Gastrocnemius medialis (tissue), 4 donors: ENCODE measurements at regions of chr3 and their contacts with region 1.

Region 1: GRCh38 chr3:137013955-137014688 is 56.3 kb downstream of the IL20RB start:
- DNase-seq: peak; percentile 70 to 86
- ATAC-seq: peak; percentile 96 to 98
- H3K4me3 ChIP-seq: peak overlapping the region; percentile 38 to 56 (median 54)
- H3K27ac ChIP-seq: peak overlapping the region; percentile 37 to 63 (median 50)
- H3K4me1 ChIP-seq: no peaks in the 10 kb centered on the region
- H3K27me3 ChIP-seq: no peaks in the 10 kb centered on the region
- CTCF ChIP-seq: peak; percentile 88 to 93 (median 92)
- POLR2A ChIP-seq: no peak

Region 2: DNA sequence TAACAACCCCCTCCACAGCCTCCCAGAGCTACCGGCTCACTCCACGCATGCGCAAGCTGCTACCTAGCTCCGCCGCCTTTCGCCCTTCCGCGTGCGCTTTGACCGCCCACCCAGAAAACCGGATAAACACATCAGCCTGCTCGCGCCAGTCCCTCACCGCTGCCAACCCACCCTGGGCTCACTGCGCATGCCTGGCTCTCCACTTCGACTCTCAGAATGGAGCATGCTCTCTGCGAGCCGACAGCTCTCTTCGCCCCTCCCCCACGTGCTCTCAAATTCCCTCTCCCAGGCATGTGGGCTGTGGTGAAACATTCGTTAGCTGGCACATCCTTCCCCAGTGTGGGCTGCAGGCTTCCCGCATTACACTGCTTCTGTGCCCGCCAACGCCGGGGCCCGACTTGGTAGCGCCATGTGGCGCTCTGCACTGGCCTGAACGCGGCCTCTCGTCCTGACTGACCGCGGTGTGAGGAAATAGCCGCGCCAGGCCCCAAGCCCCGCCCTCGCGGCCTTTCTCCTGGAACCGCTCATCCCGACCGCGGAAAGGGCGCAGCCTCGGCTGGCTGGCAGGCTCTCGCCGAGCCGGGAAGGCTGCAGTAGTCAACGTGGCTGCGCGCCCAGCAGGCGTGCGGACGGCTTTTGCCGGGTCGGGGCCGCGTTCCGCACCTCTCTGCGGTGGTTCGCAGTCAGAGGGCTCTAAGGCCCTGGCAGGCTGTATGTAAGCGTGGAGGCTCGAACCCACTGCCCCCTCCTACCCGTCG is 817.5 kb before region 1 on chr3:
- in situ Hi-C with region 1: no loop called
- intact Hi-C with region 1: loop called (anchors 5 kb)
- DNase-seq: peak; percentile 97 to 99
- ATAC-seq: peak; percentile 78 to 84
- H3K4me3 ChIP-seq: peak overlapping the region; percentile 84 to 95 (median 92)
- H3K27ac ChIP-seq: peak overlapping the region; percentile 91 to 100 (median 100)
- H3K4me1 ChIP-seq: peaks cover 32 to 38% of the 10 kb centered on the region in 2 donors
- H3K27me3 ChIP-seq: no peaks in the 10 kb centered on the region
- CTCF ChIP-seq: no peak
- POLR2A ChIP-seq: peak; percentile 69 to 80

Region 3: DNA sequence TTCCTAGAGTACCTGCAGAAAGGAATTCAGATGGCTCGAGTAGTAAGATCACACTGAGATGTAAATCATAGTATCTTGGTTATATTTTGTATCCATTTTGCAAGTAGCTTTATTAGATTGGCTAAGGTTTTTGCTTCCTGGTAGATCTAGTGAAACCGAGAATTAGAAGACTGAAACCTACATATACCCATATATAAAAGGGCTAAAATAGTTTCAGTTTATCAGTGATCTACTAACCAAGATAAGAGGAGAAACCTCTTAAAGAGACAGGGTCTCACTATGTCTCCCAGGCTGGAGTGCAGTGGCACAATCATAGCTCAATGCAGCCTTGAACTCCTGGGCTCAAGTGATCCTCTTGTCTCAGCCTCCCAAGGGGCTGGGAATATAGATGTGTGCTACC is 628.7 kb before region 1 on chr3:
- in situ Hi-C with region 1: loop called in 3 of 4 experiments (anchors 10 to 25 kb)
- intact Hi-C with region 1: no loop called
- DNase-seq: no peak
- ATAC-seq: no peak
- H3K4me3 ChIP-seq: no peak overlapping the region
- H3K27ac ChIP-seq: no peak overlapping the region
- H3K4me1 ChIP-seq: no peaks in the 10 kb centered on the region
- H3K27me3 ChIP-seq: no peaks in the 10 kb centered on the region
- CTCF ChIP-seq: no peak
- POLR2A ChIP-seq: no peak

Region 4: DNA sequence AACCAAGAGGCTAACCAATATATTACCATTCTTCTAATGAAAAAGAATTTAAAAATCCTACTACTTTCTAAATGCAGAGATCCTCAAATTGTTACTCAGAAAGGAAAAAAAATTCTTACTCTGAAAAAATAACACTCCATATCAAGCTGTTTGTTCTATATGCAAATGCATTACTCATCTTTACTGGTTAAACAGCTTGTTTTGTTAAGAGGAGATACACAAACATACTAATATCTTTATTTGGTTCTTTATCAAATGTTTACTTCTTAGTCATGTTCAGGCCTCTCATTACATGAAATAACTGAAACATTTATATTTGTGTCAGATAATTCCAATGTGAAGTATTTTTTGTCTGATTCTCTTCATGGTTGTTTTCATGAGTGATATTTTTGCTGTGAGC is 617.2 kb before region 1 on chr3:
- in situ Hi-C with region 1: loop called in 3 of 4 experiments (anchors 10 to 25 kb)
- intact Hi-C with region 1: no loop called
- DNase-seq: no peak
- ATAC-seq: no peak
- H3K4me3 ChIP-seq: no peak overlapping the region
- H3K27ac ChIP-seq: no peak overlapping the region
- H3K4me1 ChIP-seq: no peaks in the 10 kb centered on the region
- H3K27me3 ChIP-seq: no peaks in the 10 kb centered on the region
- CTCF ChIP-seq: no peak
- POLR2A ChIP-seq: no peak

Region 5: GRCh38 chr3:136861890-136862616 is 152.1 kb before region 1 on chr3 and contains the start of gene NCK1:
- in situ Hi-C with region 1: no loop called
- intact Hi-C with region 1: loop called (anchors 5 kb)
- DNase-seq: peak; percentile 98 to 99
- ATAC-seq: peak; percentile 91 to 92
- H3K4me3 ChIP-seq: peak within 1 kb of the TSS; percentile 79 to 96 (median 86)
- H3K27ac ChIP-seq: peak within 1 kb of the TSS; percentile 88 to 98 (median 94)
- H3K4me1 ChIP-seq: peaks cover 27 to 35% of the 10 kb centered on the region in 2 donors
- H3K27me3 ChIP-seq: no peaks in the 10 kb centered on the region
- CTCF ChIP-seq: peak in 4 of 5 experiments; percentile 11 to 22 (median 15)
- POLR2A ChIP-seq: peak; percentile 95
- total RNA-seq, gene NCK1: 23.5 to 36.6 (median 27.0) TPM